Activated B cell treated with CpG ODN at 0.5 μM for 24 hours (primary cell): ENCODE measurements at regions of chr10 and their contacts with region 1.

Region 1: GRCh38 chr10:88114368-88114767 is 250.9 kb downstream of the PTEN start:
- DNase-seq: no peak
- ATAC-seq: peak; percentile 40
- H3K4me3 Mint-ChIP-seq: peak overlapping the region; percentile 66
- H3K27ac Mint-ChIP-seq: no peak overlapping the region
- H3K4me1 Mint-ChIP-seq: peaks cover 2% of the 10 kb centered on the region
- H3K27me3 Mint-ChIP-seq: no peaks in the 10 kb centered on the region
- CTCF ChIP-seq: no peak

Region 2: DNA sequence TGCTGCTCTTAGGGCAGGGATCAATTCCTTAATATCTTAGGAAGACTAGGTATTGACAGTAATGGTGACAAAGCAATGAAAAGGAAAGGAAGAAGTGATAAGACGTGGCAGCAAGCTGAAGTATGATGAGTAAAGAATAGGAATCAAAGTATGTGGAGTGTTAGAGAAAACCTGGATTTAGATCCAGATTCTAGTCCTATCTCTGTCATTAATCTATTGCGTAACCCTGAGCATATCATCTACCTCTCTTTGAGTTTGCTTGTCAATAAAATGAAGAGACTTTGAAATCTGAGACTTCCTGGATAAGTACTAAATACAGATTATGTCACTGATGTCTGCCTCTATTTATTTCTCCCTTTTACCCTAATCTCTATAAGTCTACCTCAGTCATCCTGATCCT is 161.8 kb before region 1 on chr10:
- CTCF ChIA-PET with region 1: no interaction called
- POLR2A ChIA-PET with region 1: no interaction called
- intact Hi-C with region 1: loop called (anchors 2 kb)
- DNase-seq: no peak
- ATAC-seq: no peak
- H3K4me3 Mint-ChIP-seq: no peak overlapping the region
- H3K27ac Mint-ChIP-seq: peak overlapping the region; percentile 6
- H3K4me1 Mint-ChIP-seq: peaks cover 15% of the 10 kb centered on the region
- H3K27me3 Mint-ChIP-seq: no peaks in the 10 kb centered on the region
- CTCF ChIP-seq: no peak

Region 3: DNA sequence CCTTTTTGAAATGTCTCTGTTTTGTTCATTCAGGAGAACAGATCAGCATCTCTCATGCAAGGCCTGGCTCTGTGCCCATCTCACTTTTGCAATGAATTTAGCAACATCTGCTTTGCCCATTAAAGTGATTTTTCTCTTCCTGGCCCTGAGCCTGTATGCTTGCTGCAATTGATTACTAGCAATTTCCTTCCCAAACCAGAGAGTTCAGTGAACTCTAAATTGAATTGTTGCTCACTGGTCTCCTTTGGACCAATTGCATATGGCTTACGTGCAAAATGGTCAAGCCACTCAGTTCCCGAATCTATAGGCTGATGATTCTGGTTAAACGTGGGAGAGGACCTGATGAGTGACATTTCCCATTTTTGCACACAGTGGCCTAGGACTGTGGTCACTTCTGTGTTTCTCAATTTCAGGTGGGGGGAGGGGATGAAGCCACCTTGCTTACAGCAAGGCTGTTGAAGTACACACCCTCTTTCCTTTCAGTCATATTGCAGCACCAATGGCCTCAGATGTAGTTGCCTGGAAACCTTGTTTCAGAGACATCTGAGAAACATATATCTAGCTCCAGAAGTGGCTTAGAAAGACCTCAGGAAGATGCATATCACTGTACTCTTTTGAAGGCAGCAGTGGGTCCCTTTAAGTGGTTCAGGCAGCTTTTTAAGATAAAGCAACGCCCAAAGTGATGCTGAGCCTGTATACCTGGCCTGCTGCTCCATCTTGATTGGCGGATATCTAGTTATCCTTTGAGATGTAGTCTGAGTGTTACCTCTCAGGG is 49.6 kb before region 1 on chr10:
- CTCF ChIA-PET with region 1: interaction called, 13 read pairs
- POLR2A ChIA-PET with region 1: interaction called, 9 read pairs
- intact Hi-C with region 1: no loop called
- DNase-seq: no peak
- ATAC-seq: no peak
- H3K4me3 Mint-ChIP-seq: no peak overlapping the region
- H3K27ac Mint-ChIP-seq: no peak overlapping the region
- H3K4me1 Mint-ChIP-seq: peaks cover 95% of the 10 kb centered on the region
- H3K27me3 Mint-ChIP-seq: no peaks in the 10 kb centered on the region
- CTCF ChIP-seq: no peak

Region 4: DNA sequence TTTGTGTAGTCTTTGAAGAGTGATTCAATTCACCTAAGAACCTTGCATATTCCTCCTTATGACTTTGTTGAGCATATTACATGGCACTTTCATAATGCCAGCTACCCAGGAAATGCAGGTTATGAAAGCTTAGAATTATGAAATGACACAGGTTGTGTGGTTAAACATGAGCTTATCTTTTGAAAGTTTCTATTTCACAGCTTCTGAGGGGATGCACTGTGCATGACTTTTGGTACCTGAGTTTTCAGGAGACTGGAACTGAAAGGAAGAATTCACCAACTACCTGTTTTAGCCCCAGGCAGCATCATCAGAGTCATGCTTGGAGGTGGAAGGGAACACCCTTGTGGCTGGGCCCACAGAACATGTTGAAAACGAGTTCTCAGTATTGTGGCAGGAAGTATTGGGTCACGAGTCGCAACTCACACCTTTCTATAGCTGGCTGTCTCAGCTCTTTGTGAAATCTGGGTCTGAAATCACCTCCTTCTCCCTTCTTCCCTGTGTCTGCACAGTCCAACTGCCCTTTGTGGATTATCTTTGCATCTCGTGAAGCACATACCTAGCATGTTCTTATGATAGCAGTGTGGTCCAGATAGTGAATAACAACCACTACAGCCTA is 22.8 kb before region 1 on chr10:
- CTCF ChIA-PET with region 1: interaction called, 18 read pairs
- POLR2A ChIA-PET with region 1: interaction called, 10 read pairs
- intact Hi-C with region 1: no loop called
- DNase-seq: no peak
- ATAC-seq: peak; percentile 87
- H3K4me3 Mint-ChIP-seq: peak overlapping the region; percentile 11
- H3K27ac Mint-ChIP-seq: peak overlapping the region; percentile 81
- H3K4me1 Mint-ChIP-seq: peaks cover 37% of the 10 kb centered on the region
- H3K27me3 Mint-ChIP-seq: no peaks in the 10 kb centered on the region
- CTCF ChIP-seq: no peak

Region 5: DNA sequence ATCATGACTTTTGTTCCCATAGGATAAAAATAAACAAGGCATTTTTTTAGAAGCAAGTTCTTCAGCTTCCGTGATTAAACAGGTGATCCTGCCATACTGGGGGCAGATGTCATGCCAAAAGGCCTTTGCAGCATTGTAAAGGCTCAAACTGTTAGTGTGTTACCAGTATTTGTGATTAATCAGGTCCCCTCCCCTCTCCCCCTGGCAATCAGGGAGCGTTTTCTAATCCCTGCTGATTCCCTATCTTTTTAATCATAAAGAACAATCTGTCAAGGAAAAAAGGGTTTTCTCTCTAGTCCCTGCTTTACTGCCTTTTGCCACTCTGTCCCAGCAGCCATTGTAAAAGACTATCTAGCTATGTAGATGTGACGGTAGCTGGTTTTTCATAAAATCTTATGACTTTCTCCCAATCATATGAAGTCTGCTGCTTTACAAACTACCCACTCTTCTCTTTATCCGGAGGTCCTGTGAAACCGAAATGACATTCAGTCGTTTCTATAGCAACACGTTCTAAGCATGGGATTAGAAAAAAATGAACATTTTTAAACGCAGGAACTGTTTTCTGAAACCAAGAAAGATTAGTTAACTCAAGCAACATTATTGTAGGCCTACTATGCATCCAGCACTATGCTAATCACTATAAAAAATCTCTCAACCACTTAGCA is 257.8 kb after region 1 on chr10:
- CTCF ChIA-PET with region 1: no interaction called
- POLR2A ChIA-PET with region 1: no interaction called
- intact Hi-C with region 1: no loop called
- DNase-seq: no peak
- ATAC-seq: no peak
- H3K4me3 Mint-ChIP-seq: no peak overlapping the region
- H3K27ac Mint-ChIP-seq: no peak overlapping the region
- H3K4me1 Mint-ChIP-seq: peaks cover 6% of the 10 kb centered on the region
- H3K27me3 Mint-ChIP-seq: no peaks in the 10 kb centered on the region
- CTCF ChIP-seq: no peak